RWPE1 (cell line): ENCODE measurements at regions of chr2 and their contacts with region 1.

Region 1: GRCh38 chr2:96907115-96908041 is 37.5 kb upstream of the SEMA4C start:
- DNase-seq: no peak
- H3K27ac ChIP-seq: no peak overlapping the region
- CTCF ChIP-seq: no peak

Region 2: DNA sequence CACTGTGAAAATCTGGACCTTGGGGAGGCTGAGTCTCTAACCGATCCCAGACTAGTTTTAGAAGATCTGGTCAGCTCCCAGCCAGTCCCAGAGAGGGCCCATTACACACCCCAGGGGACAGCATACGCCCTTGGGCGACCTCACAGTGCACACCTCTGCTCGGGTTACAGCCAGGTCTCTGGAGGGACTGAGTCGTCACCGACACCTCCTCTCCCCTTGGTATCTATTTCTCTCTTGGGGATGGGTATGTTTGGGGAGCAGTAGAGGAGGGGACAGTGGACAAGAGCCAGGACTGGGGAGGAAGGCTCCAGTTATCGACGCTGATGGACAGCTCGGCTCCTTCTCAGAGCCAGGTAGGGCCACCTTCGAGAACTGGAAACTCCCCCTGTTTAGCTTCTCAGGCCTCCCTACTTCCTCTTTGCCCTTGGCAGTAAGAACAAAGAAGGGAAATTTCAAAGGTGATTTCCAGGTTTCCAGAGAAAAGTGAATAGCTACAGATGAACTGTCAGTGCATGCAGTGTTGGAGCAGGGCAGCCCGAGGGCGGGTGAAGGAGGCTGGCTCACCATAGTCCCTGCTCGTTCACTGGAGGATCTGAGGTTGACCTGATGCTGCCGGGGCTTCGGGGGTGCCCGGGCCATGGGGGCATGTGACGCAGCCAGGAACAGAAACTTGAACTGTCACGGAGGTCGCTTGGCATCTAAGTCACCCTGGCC is 33.1 kb before region 1 on chr2:
- CTCF ChIA-PET with region 1: no interaction called
- POLR2A ChIA-PET with region 1: no interaction called
- DNase-seq: no peak
- H3K27ac ChIP-seq: no peak overlapping the region
- CTCF ChIP-seq: no peak

Region 3: DNA sequence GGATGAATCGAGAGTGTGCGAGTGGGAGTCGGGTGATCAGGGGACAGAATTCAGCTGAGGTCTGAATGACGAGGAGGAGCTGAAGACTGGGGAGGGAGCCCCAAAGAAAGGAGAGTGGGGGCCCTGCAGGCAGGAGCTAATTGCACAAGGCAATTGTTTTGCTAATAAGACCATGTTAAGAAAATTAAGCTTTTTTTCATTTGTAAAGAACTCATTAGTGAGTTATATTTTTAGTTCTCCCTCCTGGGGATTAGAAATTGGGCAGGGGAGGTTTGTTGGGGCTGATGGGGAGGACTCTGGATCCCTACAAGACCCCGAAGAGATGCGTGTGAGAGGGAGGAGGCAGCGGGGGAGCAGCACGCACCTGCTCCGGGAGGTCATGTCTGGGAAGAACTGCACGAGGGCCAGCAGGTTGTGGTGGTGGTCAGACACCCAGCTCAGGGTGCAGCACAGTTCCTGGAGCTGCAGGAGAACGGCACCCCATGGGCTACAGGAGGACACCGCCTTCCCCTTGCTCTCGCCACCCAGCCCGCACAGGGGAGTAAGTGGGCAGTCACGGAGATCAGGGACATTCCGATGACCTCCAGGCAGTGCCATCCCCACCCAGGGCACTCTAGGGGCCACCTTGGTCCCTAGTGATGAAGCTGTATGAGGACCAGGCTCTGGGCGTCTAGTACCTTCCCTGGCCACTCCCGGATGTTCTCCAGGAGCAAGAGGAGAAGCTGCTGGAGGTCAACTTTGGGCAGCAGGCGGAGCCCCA is 13.6 kb after region 1 on chr2:
- CTCF ChIA-PET with region 1: interaction called, 11 read pairs
- POLR2A ChIA-PET with region 1: no interaction called
- DNase-seq: no peak
- H3K27ac ChIP-seq: no peak overlapping the region
- CTCF ChIP-seq: no peak

Region 4: DNA sequence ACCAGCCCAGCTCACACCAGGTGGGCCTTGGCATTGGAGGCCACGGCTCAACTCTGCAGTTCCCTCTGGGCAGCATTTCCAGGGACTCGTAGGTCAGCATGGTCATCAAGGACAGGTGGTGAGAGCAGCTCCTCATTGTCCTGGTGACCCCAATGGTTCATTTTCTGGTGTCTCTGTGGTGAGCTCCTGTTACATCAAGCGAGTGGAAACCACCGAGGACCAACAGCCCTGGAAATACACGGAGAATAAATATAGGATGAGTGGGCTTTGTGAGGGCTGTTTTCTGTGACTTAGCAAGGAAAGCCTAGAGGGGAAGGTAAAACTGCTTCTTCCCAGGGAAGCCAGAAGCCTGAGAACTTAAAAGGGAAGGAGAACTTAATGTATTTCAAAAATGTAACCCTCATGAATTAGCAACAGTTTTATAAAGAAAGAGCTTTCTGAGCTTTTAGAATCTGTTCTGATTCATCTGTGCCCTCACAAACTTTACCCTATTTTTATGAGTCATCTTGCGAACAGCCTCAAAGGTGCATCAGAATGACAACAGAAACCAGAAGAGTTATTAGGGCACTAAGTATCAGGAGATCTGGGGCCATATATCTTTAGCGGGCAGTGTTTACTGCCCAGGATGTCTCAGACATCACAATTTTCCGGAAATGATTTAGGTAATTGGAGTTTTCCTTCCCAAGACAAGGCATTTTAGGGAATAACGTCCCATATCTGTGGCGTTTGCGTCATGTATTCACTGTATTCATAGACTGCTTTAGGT is 780.9 kb after region 1 on chr2:
- CTCF ChIA-PET with region 1: no interaction called
- POLR2A ChIA-PET with region 1: no interaction called
- DNase-seq: no peak
- H3K27ac ChIP-seq: no peak overlapping the region
- CTCF ChIP-seq: no peak